Prostate gland (tissue), 2 donors: ENCODE measurements at regions of chr9 and their contacts with region 1.

Region 1: GRCh38 chr9:96383165-96383942 is at the start of gene SLC35D2:
- DNase-seq: peak; percentile 29
- H3K4me3 ChIP-seq: peak within 1 kb of the TSS; percentile 59 to 85
- H3K27ac ChIP-seq: peak within 1 kb of the TSS; percentile 78 to 87
- H3K4me1 ChIP-seq: no peaks in the 10 kb centered on the region
- H3K27me3 ChIP-seq: no peaks in the 10 kb centered on the region
- CTCF ChIP-seq: no peak
- POLR2A ChIP-seq: no peak
- total RNA-seq, gene SLC35D2: 27.4 to 29.7 TPM

Region 2: DNA sequence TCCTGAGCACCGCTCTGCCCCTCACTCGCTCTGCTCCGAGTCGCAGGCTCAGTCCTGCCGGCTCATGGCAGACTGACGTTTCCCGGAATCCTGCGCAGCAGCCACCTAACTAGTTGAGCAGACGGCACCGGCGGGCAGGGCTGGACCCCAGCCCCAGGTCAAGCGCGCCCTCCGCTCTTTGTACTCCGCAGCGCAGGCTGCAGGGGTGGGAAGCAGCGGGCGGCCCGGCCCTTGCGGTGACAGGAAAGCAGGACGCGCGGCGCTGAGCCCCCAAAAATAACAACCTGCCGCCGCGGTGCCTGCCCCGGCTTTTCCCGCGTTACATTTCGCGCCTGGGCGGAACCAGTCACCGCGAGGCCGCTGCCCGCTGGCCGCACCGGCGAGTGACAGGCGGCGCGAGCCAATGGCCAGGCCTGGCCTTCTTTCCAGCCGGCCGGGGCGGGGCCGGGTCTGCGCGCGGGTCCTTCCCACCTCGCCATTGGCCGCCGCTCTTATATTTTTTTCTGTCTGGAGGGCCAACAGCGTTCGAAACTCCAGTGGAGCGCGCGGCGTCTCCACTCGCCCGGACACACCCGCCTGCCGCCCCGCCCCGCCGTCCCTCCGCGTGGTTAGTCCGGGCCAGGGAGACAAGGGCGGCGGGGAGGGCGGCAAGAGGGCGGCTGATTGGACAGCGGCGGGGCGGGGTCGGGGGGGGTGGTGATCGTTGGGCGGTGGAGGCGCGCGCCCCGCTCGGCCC is 34.9 kb after region 1 on chr9 and contains the start of gene ZNF367:
- intact Hi-C with region 1: loop called (anchors 2 kb)
- DNase-seq: peak; percentile 97
- H3K4me3 ChIP-seq: peak within 1 kb of the TSS; percentile 75 to 77
- H3K27ac ChIP-seq: peak within 1 kb of the TSS; percentile 97 to 99
- H3K4me1 ChIP-seq: peaks cover 5% of the 10 kb centered on the region
- H3K27me3 ChIP-seq: no peaks in the 10 kb centered on the region
- CTCF ChIP-seq: no peak
- POLR2A ChIP-seq: peak; percentile 34
- total RNA-seq, gene ZNF367: 2.9 to 5.5 TPM

Region 3: GRCh38 chr9:96674914-96675538 is 291.7 kb after region 1 on chr9:
- intact Hi-C with region 1: no loop called
- DNase-seq: no peak
- H3K4me3 ChIP-seq: no peak overlapping the region
- H3K27ac ChIP-seq: no peak overlapping the region
- H3K4me1 ChIP-seq: no peaks in the 10 kb centered on the region
- H3K27me3 ChIP-seq: no peaks in the 10 kb centered on the region
- CTCF ChIP-seq: no peak
- POLR2A ChIP-seq: no peak